Prostate gland (tissue), 2 donors: ENCODE measurements at regions of chr19 and their contacts with region 1.

Region 1: DNA sequence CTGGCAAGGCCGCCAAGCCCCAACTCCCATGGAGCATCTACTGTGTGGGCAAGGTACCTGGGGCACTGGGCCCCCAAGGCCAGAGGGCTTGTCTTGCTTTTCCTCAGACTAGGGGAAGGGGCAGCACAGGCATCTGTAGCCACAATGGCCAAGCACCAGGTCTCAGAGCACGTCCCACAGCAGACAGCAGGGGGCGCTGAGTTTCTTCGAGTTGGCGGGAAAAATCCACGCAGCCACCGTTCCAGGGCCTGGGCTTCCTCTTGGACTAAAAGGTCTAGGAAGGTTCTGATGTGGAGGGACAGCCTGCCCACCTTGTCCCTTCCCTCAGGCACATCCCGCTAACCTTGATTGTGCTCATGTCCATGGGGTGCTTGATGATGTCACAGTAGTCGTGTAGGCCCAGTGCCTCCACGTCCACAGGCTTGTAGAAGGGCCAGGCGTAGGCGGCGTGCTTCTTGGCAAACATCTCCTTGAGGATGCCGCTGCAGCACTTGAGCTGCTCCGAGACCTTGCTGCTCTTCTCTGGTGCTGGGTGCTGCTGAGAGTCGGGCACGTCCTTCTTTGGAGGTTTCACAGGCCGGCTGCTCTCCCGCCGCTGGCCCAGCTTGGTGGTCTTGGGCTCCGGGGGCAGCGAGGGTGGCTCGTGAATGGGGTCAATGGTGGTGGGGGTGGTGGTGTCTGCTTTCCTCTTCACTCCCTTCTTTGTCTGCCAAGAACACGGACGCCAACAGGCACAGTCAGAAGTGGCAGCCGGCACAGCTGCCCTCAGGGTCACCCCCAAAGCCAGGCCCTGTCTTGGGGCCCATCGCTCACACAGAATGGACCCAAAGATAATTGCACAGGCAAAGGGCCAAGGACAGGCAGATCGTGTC is 32.0 kb upstream of the EPHX3 start:
- DNase-seq: peak; percentile 61
- H3K4me3 ChIP-seq: no peak overlapping the region
- H3K27ac ChIP-seq: peak overlapping the region in 1 of 2 donors; percentile 29
- H3K4me1 ChIP-seq: peaks cover 21% of the 10 kb centered on the region
- H3K27me3 ChIP-seq: no peaks in the 10 kb centered on the region
- CTCF ChIP-seq: peak; percentile 39 to 83 (median 80)
- POLR2A ChIP-seq: no peak

Region 2: GRCh38 chr19:14997981-14998380 is 266.3 kb before region 1 on chr19:
- intact Hi-C with region 1: no loop called
- DNase-seq: no peak
- H3K4me3 ChIP-seq: no peak overlapping the region
- H3K27ac ChIP-seq: no peak overlapping the region
- H3K4me1 ChIP-seq: no peaks in the 10 kb centered on the region
- H3K27me3 ChIP-seq: peaks cover 4% of the 10 kb centered on the region
- CTCF ChIP-seq: no peak
- POLR2A ChIP-seq: no peak

Region 3: DNA sequence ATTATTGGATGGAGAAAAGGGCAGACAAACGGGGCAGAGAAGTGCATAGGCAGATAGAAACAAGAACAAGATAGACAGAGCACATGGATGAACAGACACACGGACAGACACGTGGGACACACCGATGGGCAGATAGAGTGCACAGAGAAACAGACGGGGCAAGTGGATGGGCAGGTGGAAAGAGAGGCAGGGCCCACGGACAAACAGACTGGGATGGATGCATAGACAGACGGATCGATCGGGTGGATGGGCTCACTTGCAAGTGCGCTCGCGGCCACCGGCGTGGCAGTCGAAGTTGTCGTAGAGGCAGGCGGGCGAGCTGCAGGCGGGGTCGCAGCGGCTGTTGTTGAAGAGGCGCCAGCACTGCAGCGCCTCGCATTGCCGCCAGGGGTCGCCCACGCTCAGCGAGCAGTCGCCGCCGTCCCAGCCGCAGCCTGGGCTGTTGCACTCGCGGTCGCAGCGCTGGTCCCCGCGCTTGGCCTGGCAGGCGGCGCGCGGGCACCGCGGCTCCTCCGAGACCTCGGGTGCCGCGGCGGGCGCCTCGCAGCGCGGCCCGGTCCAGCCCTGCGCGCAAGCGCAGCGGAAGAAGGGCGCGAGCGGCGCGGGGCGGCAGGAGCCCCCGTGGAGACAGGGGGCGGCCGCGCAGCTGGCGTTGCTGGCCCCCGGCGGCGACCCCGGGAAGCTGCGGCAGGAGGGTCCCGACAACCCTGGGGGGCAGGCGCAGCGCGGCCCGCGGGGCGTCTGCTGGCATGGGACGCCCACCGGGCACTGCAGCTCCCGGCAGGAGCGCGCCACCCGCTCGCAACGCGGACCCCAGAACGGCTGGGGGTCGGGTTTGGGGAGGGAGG is 86.8 kb before region 1 on chr19:
- intact Hi-C with region 1: loop called (anchors 5 kb)
- DNase-seq: peak; percentile 65
- H3K4me3 ChIP-seq: peak overlapping the region; percentile 7 to 28
- H3K27ac ChIP-seq: no peak overlapping the region
- H3K4me1 ChIP-seq: no peaks in the 10 kb centered on the region
- H3K27me3 ChIP-seq: no peaks in the 10 kb centered on the region
- CTCF ChIP-seq: peak; percentile 94 to 99 (median 96)
- POLR2A ChIP-seq: no peak

Region 4: DNA sequence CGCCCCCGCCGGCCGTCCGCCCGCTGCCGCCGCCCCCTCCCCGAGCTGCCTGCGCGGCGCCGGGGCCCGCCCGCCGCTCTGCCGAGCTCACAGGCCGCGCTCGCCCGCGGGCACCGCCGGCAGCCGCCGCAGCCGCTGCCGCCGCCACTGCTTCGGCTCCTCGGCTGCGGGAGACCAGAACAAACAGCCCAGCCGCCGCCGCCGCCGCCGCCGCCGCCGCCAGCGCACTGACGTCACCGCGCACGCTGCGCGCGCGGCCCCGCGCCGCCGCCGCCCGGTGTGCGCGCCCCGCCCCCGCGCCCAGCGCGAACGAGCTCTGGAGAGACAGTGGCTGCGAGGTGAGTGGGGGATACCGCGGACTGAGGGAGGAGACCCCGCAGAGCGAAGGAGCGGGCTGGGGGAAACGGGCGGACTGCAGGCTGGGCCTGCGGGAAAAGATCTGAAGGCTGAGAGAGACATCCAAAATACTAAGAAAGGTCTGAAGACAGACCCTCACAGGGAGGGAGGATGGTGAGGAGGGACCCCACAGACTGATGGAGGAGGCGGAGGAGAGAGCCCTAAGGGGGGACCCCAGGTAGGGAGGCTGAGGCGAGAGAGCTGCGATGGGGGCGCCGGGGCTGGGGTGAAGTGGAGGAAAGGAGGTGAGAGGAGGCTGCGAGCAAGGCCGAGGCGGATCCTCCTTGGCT is 68.2 kb after region 1 on chr19 and contains the start of gene BRD4:
- intact Hi-C with region 1: loop called (anchors 1 kb)
- DNase-seq: peak; percentile 51
- H3K4me3 ChIP-seq: peak within 1 kb of the TSS; percentile 90 to 92
- H3K27ac ChIP-seq: peak within 1 kb of the TSS; percentile 85 to 95
- H3K4me1 ChIP-seq: peaks cover 9% of the 10 kb centered on the region
- H3K27me3 ChIP-seq: no peaks in the 10 kb centered on the region
- CTCF ChIP-seq: no peak
- POLR2A ChIP-seq: no peak
- total RNA-seq, gene BRD4: 45.6 to 76.0 TPM

Region 5: DNA sequence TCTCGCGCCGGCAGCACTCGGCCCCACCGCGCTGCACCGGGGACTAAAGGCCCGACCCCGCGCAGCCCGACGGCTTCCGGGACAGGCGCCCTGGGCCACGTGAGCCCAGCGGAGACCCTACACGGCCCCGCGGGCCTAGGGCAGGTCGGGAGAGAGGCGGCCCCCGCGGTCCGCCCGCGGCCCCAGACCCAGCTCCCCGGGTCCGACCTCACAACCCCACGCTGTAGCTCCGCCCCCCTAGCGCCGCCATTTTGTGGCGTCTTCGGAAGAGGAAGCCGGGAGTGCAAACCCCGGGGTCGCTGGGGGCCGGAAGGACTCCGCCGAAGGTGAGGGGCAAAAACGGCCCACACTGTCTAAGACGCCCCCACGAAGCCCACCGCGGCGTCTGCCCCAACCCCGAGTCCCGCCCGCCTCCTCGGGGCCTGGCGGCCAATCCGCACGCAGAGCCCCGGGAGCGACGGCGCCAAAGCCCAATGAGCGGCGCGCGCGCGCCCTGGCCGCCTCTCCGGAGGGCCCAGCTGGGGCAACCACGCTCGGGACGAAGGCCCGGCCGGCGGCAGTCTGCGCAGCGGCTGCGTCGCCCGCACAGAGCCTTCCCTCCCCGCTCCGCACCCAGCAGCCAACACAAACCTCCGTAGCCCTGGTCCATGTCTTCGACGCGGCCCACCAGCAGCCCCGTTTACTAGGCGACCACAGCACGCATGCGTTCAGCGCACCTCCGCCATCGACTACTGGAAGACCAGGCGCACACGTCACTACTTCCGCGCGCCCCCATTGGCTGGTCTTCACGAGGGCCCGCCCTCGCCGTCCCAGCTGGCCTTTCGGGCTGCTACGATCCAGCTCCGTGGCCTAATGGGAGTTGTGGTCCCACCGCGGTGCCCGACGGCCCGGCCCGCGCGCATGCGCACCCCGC is 115.0 kb after region 1 on chr19 and contains the start of gene AKAP8:
- intact Hi-C with region 1: loop called (anchors 5 kb)
- DNase-seq: peak; percentile 99
- H3K4me3 ChIP-seq: peak within 1 kb of the TSS; percentile 80 to 94
- H3K27ac ChIP-seq: peak within 1 kb of the TSS; percentile 92 to 96
- H3K4me1 ChIP-seq: peaks cover 17% of the 10 kb centered on the region
- H3K27me3 ChIP-seq: no peaks in the 10 kb centered on the region
- CTCF ChIP-seq: peak in 2 of 4 experiments; percentile 4 to 14
- POLR2A ChIP-seq: peak; percentile 66
- total RNA-seq, gene AKAP8: 30.3 to 34.2 TPM

Region 6: GRCh38 chr19:15432629-15433518 is 168.6 kb after region 1 on chr19:
- intact Hi-C with region 1: loop called (anchors 5 kb)
- DNase-seq: peak; percentile 84
- H3K4me3 ChIP-seq: peak overlapping the region; percentile 78 to 85
- H3K27ac ChIP-seq: peak overlapping the region; percentile 87 to 88
- H3K4me1 ChIP-seq: peaks cover 18% of the 10 kb centered on the region
- H3K27me3 ChIP-seq: no peaks in the 10 kb centered on the region
- CTCF ChIP-seq: no peak
- POLR2A ChIP-seq: no peak

Region 7: GRCh38 chr19:15449620-15450527 is 185.6 kb after region 1 on chr19 and contains the start of gene WIZ:
- intact Hi-C with region 1: loop called (anchors 5 kb)
- DNase-seq: peak; percentile 61
- H3K4me3 ChIP-seq: peak within 1 kb of the TSS; percentile 59 to 65
- H3K27ac ChIP-seq: peak within 1 kb of the TSS; percentile 62 to 73
- H3K4me1 ChIP-seq: peaks cover 6% of the 10 kb centered on the region
- H3K27me3 ChIP-seq: no peaks in the 10 kb centered on the region
- CTCF ChIP-seq: no peak
- POLR2A ChIP-seq: no peak
- total RNA-seq, gene WIZ: 55.9 to 93.3 TPM

Region 8: GRCh38 chr19:15555759-15556633 is 291.7 kb after region 1 on chr19:
- intact Hi-C with region 1: loop called (anchors 2 kb)
- DNase-seq: peak; percentile 92
- H3K4me3 ChIP-seq: peak overlapping the region in 1 of 2 donors; percentile 19
- H3K27ac ChIP-seq: peak overlapping the region; percentile 54 to 70
- H3K4me1 ChIP-seq: no peaks in the 10 kb centered on the region
- H3K27me3 ChIP-seq: no peaks in the 10 kb centered on the region
- CTCF ChIP-seq: peak; percentile 64 to 91 (median 80)
- POLR2A ChIP-seq: no peak